HEK293T (cell line): ENCODE measurements at regions of chr11 and their contacts with region 1.

Region 1: DNA sequence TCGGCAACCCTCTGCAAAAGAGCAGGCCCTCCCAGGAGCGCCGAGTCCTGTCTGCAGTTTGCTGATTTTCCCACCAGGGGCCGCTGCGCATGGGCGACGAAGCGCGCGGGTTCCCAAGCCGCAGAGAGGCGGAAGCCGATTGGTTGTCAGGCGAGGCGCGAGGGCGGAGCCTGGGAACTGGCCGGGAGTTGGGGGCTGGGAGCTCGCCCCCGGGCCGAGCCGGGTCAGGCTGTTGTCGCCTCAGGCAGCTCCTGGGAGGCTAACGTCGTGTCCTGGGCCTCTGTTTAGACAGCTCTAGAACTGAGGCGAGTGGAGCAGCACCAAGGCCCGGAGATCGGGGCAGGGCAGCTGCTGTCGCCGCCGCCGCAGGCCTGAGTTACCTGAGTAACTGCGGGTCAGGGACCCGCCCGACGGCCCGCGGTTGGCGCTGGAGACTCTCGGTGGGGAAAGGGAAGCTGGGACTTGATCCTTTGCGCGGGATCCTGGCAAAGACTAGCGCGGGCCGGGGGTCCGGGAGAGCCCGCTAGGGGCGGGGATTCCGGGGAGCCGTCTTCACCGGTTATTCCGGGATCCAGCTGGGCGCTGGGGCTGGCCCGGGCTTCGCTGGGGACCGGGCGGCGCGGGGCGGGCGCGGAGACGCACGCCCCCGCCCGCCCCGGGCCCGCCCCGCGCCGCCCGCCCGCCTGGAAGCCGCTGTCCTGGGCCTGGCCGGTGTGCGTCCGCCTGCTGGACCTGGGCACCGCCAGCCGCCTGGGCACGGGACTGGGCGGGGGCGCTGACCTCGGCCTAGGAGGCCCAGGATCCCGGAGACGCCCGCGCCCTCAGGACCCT is at the start of gene STIM1:
- DNase-seq: peak; percentile 93

Region 2: GRCh38 chr11:3841426-3842350 is 13.5 kb before region 1 on chr11:
- CTCF ChIA-PET with region 1: interaction called, 28 read pairs
- POLR2A ChIA-PET with region 1: interaction called, 25 read pairs
- DNase-seq: peak; percentile 78

Region 3: DNA sequence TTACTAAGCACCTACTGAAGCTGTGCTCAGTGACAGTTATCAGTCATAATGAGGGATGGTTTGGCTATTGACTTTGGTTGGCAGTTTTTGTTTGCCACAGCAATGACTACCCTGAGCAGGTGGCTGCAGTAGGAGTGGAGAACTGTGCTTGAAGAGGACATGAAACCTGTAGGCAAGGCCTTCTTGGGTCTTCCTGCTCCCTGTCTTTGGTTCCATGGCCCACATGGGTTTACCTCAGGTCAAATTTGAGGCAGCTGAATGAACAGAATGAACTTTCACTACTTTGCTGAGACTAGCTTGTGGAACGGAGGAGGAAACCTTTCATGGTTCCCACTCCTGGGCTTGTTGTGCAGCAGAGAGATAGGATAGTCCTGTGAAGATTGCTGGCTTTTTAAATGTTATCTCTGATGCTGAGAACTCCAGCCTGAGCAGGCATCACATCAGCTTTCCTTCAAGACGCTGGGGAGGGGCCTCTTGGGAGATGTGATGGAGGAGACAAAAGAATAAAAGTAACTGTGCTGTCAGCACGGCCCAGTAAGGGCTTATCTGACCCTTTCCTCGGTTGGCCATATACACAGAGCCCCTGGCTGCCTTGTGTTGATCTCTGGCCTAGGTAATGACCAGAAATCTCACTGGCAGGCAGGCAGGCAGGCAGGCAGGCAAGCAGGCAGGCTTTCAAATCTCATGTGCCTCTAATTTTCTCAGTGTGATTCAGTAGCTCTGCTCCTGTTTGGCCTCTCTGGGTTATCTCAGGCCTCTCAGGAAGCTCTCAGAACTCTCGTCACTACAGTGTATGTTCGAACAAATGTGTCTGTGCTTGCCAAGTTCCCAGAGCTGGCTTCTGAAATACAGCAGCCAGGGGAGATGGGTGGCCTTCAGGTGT is 12.3 kb after region 1 on chr11:
- CTCF ChIA-PET with region 1: interaction called, 14 read pairs
- POLR2A ChIA-PET with region 1: interaction called, 11 read pairs
- DNase-seq: no peak

Region 4: GRCh38 chr11:4066910-4067309 is 211.7 kb after region 1 on chr11:
- CTCF ChIA-PET with region 1: interaction called, 71 read pairs
- POLR2A ChIA-PET with region 1: interaction called, 9 read pairs
- DNase-seq: no peak

Region 5: DNA sequence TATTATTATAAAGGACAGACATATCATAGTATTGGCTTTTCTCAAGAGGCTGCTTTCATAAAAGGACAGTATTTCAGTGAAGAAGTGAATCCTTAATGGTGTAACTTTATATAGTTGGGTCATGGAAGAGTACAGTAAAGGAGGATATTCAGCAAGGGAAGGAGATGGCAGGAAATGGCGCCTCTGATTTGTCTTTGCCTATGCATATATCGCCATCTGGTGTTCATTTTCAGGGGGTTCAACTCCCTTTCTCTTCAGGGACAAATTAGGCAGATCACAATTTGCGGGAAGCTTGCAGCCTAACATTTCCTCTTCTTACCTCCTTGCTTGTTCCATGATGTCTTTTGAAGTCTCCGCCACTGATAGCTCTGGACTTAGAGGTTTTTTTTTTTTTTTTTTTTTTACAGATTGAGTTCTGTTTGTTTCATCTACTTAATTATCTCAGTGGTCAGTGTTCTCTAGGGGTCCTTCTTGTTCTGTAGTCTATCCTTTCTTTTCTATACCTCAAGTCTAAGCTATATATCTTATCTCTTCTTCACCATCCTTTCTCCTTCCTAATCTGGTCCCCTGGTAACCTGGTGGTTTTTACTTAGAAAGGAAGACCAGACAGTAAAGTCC is 217.6 kb after region 1 on chr11:
- CTCF ChIA-PET with region 1: interaction called, 71 read pairs
- POLR2A ChIA-PET with region 1: interaction called, 9 read pairs
- DNase-seq: peak; percentile 69